Heart left ventricle (tissue), 16 donors: ENCODE measurements at regions of chr6 and their contacts with region 1.

Region 1: DNA sequence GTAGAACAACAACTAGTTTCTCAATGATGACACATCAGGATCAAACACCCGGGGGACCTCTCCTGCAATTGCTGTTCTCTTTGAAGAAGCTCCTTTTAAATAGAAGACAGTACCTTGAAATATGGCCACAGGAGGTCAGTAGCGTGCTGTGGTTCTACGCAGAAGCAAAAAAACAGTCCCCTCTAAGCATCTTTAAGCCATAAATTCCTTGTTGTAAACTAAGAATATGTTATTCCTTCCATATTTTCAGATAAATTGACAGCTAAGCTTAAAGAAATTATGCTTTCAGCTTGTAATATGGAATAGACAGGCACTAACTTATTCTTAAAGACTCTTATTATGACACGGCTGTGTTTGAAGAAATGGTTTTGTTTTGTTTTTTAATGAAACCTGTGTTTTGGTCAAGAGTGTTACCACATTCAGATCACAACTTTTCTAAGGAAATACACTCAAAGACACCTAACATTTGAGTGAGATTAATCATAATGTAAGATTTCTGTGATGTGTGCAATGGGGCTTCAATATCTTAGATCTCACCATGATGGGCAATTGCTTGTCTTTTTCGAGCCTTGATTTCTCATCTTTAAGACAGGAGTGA is 49.7 kb upstream of the IL20RA start:
- DNase-seq: peak in 4 of 5 donors; percentile 39 to 61 (median 42)
- ATAC-seq: peak; percentile 32 to 80 (median 76)
- H3K4me3 ChIP-seq: no peak overlapping the region
- H3K27ac ChIP-seq: no peak overlapping the region
- H3K4me1 ChIP-seq: peaks cover 0 to 10% (median 2%) of the 10 kb centered on the region in 12 donors
- H3K27me3 ChIP-seq: no peaks in the 10 kb centered on the region
- CTCF ChIP-seq: peak; percentile 68 to 92 (median 80)
- POLR2A ChIP-seq: no peak

Region 2: GRCh38 chr6:137175157-137175867 is 80.8 kb after region 1 on chr6:
- intact Hi-C with region 1: no loop called
- DNase-seq: no peak
- ATAC-seq: peak; percentile 74 to 90 (median 82)
- H3K4me3 ChIP-seq: no peak overlapping the region
- H3K27ac ChIP-seq: peak overlapping the region in 10 of 12 donors; percentile 3 to 79 (median 43)
- H3K4me1 ChIP-seq: peaks cover 0 to 16% (median 5%) of the 10 kb centered on the region in 12 donors
- H3K27me3 ChIP-seq: no peaks in the 10 kb centered on the region
- CTCF ChIP-seq: no peak
- POLR2A ChIP-seq: no peak

Region 3: GRCh38 chr6:137202078-137202477 is 107.6 kb after region 1 on chr6:
- intact Hi-C with region 1: loop called in 9 of 10 experiments (anchors 5 to 10 kb)
- DNase-seq: peak in 3 of 5 donors; percentile 27 to 38 (median 33)
- ATAC-seq: peak; percentile 68 to 83 (median 77)
- H3K4me3 ChIP-seq: no peak overlapping the region
- H3K27ac ChIP-seq: no peak overlapping the region
- H3K4me1 ChIP-seq: peaks cover 0 to 44% (median 14%) of the 10 kb centered on the region in 12 donors
- H3K27me3 ChIP-seq: no peaks in the 10 kb centered on the region
- CTCF ChIP-seq: peak; percentile 20 to 61 (median 50)
- POLR2A ChIP-seq: no peak

Region 4: GRCh38 chr6:137261393-137262160 is 167.1 kb after region 1 on chr6:
- intact Hi-C with region 1: loop called in 1 of 10 experiments (anchors 5 kb)
- DNase-seq: no peak
- ATAC-seq: peak; percentile 36 to 71 (median 58)
- H3K4me3 ChIP-seq: no peak overlapping the region
- H3K27ac ChIP-seq: peak overlapping the region; percentile 32 to 72 (median 49)
- H3K4me1 ChIP-seq: peaks cover 0 to 31% (median 8%) of the 10 kb centered on the region in 12 donors
- H3K27me3 ChIP-seq: no peaks in the 10 kb centered on the region
- CTCF ChIP-seq: no peak
- POLR2A ChIP-seq: no peak

Region 5: GRCh38 chr6:137313928-137314855 is 219.7 kb after region 1 on chr6:
- intact Hi-C with region 1: loop called (anchors 1 to 5 kb)
- DNase-seq: peak; percentile 68 to 84 (median 76)
- ATAC-seq: peak; percentile 67 to 96 (median 90)
- H3K4me3 ChIP-seq: peak overlapping the region in 7 of 12 donors; percentile 6 to 40 (median 23)
- H3K27ac ChIP-seq: no peak overlapping the region
- H3K4me1 ChIP-seq: peaks cover 0 to 23% (median 10%) of the 10 kb centered on the region in 12 donors
- H3K27me3 ChIP-seq: no peaks in the 10 kb centered on the region
- CTCF ChIP-seq: peak; percentile 64 to 86 (median 78)
- POLR2A ChIP-seq: no peak